PC-3 (cell line): ENCODE measurements at regions of chr10 and their contacts with region 1.

Region 1: DNA sequence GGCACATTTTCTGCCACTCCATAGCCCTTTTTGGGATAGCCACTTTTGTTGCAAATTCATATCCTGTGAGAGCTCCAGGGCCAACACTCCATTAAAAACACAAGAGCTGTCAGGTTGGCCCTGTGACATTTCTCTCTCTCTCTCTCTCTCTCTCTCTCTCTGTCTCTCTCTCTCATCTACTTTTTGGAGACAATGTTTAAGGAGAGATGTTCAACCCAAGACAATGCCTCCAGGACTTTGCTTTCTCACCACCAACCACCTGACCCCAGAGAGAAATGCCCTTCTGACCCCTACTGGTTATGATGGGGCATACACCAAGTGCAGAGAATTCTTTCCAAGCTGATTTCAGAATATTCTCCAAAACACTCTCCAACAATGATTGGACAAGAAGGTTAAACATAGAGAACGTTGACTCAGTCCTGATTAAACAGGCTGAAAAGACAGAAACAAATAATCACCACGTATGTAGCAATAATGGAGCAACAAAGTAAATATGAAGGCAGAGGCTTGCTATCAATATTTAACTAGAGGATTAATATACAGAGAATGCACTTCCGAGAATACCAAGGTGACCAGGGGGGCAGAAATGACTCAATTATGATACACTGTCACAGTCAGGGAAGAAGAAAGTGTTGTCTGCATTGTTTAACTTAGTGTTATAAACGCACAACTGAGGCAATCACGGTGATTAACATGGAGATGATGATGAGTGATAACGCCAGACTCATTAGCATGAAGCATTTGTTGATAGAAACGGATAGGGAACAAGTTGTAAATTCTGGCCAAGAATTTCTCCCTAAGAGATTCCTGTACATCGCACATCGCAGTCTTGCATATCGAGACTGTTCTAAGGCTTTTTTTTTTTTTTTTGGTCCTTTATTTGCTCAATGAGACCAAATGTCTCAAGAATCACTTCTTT is 178.5 kb downstream of the NRP1 start:
- DNase-seq: peak; percentile 100
- ATAC-seq: peak; percentile 90
- H3K4me3 ChIP-seq: peak overlapping the region; percentile 15
- H3K27ac ChIP-seq: peak overlapping the region; percentile 65
- H3K4me1 ChIP-seq: peaks cover 36% of the 10 kb centered on the region
- H3K27me3 ChIP-seq: no peaks in the 10 kb centered on the region
- CTCF ChIP-seq: no peak

Region 2: GRCh38 chr10:32771217-32771616 is 384.8 kb before region 1 on chr10:
- CTCF ChIA-PET with region 1: no interaction called
- POLR2A ChIA-PET with region 1: no interaction called
- intact Hi-C with region 1: no loop called
- DNase-seq: no peak
- ATAC-seq: no peak
- H3K4me3 ChIP-seq: no peak overlapping the region
- H3K27ac ChIP-seq: no peak overlapping the region
- H3K4me1 ChIP-seq: no peaks in the 10 kb centered on the region
- H3K27me3 ChIP-seq: no peaks in the 10 kb centered on the region
- CTCF ChIP-seq: no peak

Region 3: DNA sequence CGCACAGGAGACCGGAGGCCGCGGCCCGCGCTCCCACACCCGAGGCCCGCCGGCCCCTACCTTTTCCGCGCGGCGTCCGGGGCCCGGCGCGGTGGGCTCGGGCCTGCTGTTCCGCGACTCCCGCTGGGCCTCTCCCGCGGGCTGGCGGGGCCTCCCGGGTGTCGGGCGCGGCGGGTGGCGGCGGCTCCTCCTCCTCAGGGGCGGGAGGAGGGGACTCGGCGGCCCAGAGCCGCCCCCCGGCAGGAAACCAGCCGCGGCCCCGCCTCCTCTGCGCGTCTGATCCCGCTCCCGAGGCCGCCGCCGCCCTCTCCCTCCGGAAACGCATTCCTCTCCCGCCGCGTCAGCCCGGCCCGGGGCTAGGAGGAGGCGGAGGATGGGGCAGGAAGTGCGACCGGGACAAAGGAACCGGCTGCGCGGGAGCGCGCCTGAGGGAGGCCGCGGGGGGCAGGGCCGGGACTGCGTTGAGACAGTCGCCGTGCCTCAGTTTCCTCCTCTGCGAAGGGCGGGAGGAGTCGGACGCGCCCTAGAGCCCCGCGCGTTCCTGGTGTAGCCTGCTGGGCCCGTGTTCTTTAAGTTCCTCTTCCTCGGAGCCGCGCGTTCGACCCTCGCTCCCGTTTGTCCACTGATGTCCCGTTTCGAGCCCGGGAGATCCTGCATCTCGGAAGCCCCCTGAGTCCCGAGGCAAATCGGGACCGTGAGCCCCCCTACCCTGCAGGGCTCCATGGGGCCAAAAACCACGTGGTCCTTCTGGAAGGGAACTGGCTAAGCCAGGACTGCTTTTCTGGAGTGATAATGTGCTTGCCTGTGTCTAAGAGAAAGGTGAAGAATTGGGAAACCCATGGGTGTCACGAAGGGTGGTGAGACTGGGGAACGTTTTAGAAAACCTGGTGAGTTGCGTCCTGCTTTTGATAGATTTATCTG is 197.6 kb before region 1 on chr10 and contains the start of gene ITGB1:
- CTCF ChIA-PET with region 1: no interaction called
- POLR2A ChIA-PET with region 1: no interaction called
- intact Hi-C with region 1: loop called (anchors 1 kb)
- DNase-seq: peak; percentile 100
- ATAC-seq: peak; percentile 77
- H3K4me3 ChIP-seq: peak within 1 kb of the TSS; percentile 75
- H3K27ac ChIP-seq: peak within 1 kb of the TSS; percentile 82
- H3K4me1 ChIP-seq: peaks cover 68% of the 10 kb centered on the region
- H3K27me3 ChIP-seq: no peaks in the 10 kb centered on the region
- CTCF ChIP-seq: no peak
- total RNA-seq, gene ITGB1: 956 and 1,010 TPM in 2 replicates

Region 4: GRCh38 chr10:33032654-33033151 is 123.3 kb before region 1 on chr10:
- CTCF ChIA-PET with region 1: interaction called, 4 read pairs
- POLR2A ChIA-PET with region 1: no interaction called
- intact Hi-C with region 1: loop called (anchors 1 kb)
- DNase-seq: peak; percentile 100
- ATAC-seq: peak; percentile 90
- H3K4me3 ChIP-seq: peak overlapping the region; percentile 41
- H3K27ac ChIP-seq: peak overlapping the region; percentile 75
- H3K4me1 ChIP-seq: peaks cover 20% of the 10 kb centered on the region
- H3K27me3 ChIP-seq: no peaks in the 10 kb centered on the region
- CTCF ChIP-seq: no peak

Region 5: DNA sequence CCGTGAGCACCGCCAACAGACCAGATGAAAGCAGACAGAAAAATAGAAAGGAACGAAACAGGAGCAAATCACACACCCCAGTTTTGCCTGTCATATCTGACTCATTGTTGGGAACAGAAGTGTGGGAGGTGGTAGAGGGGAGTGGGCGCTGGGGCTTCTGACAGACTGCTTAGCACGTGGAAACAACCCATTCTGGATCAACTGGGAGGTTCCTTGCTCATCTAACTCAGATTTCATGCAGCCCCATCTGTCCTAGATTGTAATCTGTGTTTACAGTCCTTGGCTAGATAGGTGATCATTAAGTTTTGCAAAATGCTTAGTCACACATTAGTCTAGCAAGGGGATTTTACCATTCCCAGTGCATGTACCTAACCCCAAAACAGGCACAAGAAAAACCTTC is 24.4 kb after region 1 on chr10:
- CTCF ChIA-PET with region 1: no interaction called
- POLR2A ChIA-PET with region 1: no interaction called
- intact Hi-C with region 1: loop called (anchors 1 kb)
- DNase-seq: peak; percentile 82
- ATAC-seq: peak; percentile 8
- H3K4me3 ChIP-seq: no peak overlapping the region
- H3K27ac ChIP-seq: peak overlapping the region; percentile 9
- H3K4me1 ChIP-seq: peaks cover 36% of the 10 kb centered on the region
- H3K27me3 ChIP-seq: no peaks in the 10 kb centered on the region
- CTCF ChIP-seq: no peak

Region 6: GRCh38 chr10:33237736-33238624 is 82.0 kb after region 1 on chr10:
- CTCF ChIA-PET with region 1: interaction called, 3 read pairs
- POLR2A ChIA-PET with region 1: no interaction called
- intact Hi-C with region 1: loop called (anchors 1 kb)
- DNase-seq: peak; percentile 100
- ATAC-seq: peak; percentile 94
- H3K4me3 ChIP-seq: peak overlapping the region; percentile 2; the same call in 1 of the 2 replicates
- H3K27ac ChIP-seq: peak overlapping the region; percentile 66
- H3K4me1 ChIP-seq: peaks cover 61% of the 10 kb centered on the region
- H3K27me3 ChIP-seq: no peaks in the 10 kb centered on the region
- CTCF ChIP-seq: no peak

Region 7: DNA sequence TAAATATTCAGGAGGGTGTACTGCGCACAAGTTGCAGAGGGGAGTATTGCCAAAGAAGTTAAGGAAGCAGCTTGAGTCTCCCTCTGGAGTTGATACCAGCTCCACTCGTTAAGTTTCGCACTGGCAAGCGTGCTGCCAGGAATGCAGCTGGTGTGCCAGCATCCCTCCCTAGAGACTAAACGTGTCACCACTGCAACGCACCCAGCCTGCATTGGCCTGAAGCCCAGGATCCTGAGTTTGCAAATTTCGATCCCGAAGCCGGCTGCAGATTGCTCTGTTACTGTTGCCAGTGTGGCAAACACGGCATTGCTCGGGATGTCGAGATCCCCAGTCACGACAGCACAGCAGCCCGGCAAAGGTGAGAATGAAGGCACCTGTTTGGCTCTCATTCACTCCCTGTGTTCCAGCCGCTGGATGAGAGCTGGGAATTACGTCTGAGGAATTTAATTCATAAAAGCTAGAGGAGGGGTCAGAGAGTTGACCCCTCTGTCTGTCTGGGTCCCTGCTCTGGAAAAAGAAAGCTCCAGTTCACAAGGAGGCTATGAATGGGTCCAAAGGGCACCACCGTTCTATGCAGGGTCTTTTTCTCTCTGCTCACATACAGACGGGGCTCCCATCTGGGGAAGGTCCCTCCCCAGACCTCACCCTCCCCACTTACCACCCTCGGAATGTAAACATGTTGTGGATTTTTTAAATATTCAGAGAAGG is 117.5 kb after region 1 on chr10:
- CTCF ChIA-PET with region 1: interaction called, 9 read pairs
- POLR2A ChIA-PET with region 1: no interaction called
- intact Hi-C with region 1: loop called (anchors 1 kb)
- DNase-seq: peak; percentile 100
- ATAC-seq: peak; percentile 87
- H3K4me3 ChIP-seq: peak overlapping the region; percentile 47
- H3K27ac ChIP-seq: peak overlapping the region; percentile 71
- H3K4me1 ChIP-seq: peaks cover 66% of the 10 kb centered on the region
- H3K27me3 ChIP-seq: no peaks in the 10 kb centered on the region
- CTCF ChIP-seq: no peak